ENCODE measurements at regions of chr22 and their contacts with region 1.

Region 1: DNA sequence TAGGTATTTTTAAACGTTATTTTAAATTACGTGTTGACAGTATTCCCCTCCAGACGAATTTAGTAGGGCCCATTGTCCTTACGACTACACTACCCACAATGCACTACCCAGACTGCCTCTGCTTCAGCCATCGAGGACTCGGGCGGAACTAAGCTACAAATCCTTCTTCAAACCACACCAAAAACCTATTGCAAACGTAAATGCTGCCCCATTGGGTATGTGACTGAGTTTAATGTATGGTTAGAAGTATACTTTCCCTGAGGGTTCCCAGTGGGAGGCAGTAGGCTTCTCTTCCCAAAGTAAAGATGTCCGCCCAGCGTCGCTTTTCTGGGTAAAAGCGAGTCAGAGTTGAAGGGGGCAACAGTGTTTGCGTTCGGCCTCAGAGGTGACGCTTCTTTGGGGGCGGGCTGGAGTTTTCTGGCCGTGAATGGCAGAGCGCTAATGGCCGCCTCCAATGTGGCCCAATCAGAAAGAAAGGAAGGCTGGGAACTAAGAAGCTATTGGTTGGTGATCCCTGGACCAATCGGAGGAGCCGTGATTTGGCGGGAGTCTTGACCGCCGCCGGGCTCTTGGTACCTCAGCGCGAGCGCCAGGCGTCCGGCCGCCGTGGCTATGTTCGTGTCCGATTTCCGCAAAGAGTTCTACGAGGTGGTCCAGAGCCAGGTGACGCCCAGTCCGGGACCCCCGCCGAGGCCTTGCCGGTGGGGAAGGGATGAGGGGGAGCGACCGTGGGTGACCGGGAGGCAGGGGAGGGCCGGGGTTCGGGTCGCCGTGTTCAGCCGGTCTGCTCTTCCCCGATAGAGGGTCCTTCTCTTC is at the start of gene CDC45:
- DNase-seq: peak; percentile 98
- total RNA-seq, gene CDC45: not detected

Region 2: DNA sequence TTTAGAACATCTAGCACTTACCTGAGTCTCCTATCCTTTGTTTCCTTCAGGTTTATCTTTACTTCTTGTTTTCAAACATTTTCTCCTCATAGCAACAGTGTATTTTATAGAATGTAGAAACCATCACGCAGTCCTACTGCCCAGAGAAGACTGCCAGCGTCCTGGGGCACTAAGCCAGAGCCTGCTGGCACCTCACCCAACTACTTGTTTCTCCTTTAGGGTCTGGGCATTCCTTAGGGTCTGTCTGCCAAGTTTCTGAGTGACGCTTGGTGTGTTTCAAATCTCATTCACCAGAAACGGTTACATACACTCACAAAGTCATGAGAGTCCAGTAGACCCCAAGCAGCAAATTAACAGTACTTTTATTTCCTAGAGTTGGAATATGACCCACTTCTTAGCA is 251.4 kb before region 1 on chr22:
- intact Hi-C with region 1: loop called (anchors 10 kb)
- DNase-seq: no peak

Region 3: DNA sequence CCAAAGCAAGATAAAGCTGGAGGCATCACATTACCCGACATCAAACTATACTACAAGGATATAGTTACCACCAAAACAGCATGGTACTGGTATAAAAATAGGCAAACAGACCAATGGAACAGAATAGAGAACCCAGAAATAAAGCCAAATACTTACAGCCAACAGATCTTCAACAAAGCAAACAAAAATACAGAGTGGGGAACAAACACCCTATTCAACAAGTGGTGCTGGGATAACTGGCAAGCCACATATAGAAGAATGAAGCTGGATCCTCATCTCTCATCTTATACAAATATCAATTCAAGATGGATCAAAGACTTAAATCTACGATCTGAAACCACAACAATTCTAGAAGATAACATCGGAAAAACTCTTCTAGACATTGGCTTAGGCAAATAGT is 138.1 kb before region 1 on chr22:
- intact Hi-C with region 1: no loop called
- DNase-seq: no peak